Activated CD4-positive, alpha-beta T cell treated with anti-CD3 and anti-CD28 coated beads, Interleukin-2, amount 10 ng/mL, durations not matched to agents 7 days and 5 days (primary cell): ENCODE measurements at regions of chr7 and their contacts with region 1.

Region 1: DNA sequence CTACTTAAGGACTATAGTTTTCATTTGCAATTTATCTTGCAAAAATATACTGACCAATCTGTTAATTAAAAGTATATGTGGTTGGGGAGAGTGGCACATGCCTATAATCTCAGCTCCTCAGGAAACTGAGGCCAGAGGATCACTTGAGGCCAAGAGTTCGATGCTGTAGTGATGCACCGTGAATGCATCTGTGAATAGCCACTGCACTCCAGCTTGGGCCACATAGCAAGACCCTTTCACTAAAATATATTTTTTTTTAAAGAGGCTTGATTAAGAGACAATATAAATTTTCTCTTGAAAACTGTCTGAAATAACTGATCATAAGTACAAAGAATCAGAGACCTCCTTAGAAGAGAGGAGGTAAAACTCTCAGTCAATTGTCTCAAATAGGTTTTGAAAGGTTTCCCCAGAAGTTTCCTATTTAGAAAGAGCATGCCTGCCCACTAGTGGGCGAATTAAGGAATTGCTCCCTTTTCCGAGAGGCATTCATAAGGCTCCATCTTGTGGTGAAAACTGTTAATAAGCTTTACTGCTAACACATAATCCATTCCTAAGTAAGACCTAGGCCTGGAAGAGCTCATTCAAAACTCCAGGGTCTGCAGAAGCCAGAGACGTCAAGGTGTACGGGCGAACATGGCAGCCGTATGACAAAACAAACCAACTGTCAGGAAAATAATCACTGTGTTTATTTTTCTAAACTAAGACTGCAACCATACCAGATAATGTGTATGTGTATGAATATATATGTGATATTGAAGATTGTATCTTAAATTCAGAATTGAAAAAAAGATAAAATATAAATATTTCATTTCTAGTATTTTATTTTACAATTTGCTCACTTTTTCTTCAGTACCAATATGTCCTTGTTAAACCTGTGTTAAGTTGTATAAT is 6.8 kb upstream of the TAS2R40 start:
- DNase-seq: peak; percentile 78
- H3K4me3 Mint-ChIP-seq: no peak overlapping the region
- H3K27ac Mint-ChIP-seq: no peak overlapping the region
- H3K4me1 Mint-ChIP-seq: no peaks in the 10 kb centered on the region
- H3K27me3 Mint-ChIP-seq: peaks cover 6% of the 10 kb centered on the region

Region 2: GRCh38 chr7:143002106-143002505 is 212.9 kb before region 1 on chr7:
- CTCF ChIA-PET with region 1: interaction called, 26 read pairs
- POLR2A ChIA-PET with region 1: no interaction called
- DNase-seq: no peak
- H3K4me3 Mint-ChIP-seq: no peak overlapping the region
- H3K27ac Mint-ChIP-seq: no peak overlapping the region
- H3K4me1 Mint-ChIP-seq: peaks cover 7% of the 10 kb centered on the region
- H3K27me3 Mint-ChIP-seq: peaks cover 8% of the 10 kb centered on the region

Region 3: GRCh38 chr7:143008007-143008901 is 206.8 kb before region 1 on chr7:
- CTCF ChIA-PET with region 1: interaction called, 26 read pairs
- POLR2A ChIA-PET with region 1: no interaction called
- DNase-seq: peak; percentile 81
- H3K4me3 Mint-ChIP-seq: no peak overlapping the region
- H3K27ac Mint-ChIP-seq: no peak overlapping the region
- H3K4me1 Mint-ChIP-seq: peaks cover 5% of the 10 kb centered on the region
- H3K27me3 Mint-ChIP-seq: peaks cover 17% of the 10 kb centered on the region